ENCODE measurements at regions of chr6 and their contacts with region 1.

Region 1: GRCh38 chr6:131199568-131200272 is 64.5 kb downstream of the AKAP7 start:
- DNase-seq: peak; percentile 70
- ATAC-seq: peak; percentile 91
- H3K4me3 Mint-ChIP-seq: peak overlapping the region; percentile 87
- H3K27ac Mint-ChIP-seq: peak overlapping the region; percentile 90
- H3K4me1 Mint-ChIP-seq: peaks cover 55% of the 10 kb centered on the region
- H3K27me3 Mint-ChIP-seq: no peaks in the 10 kb centered on the region

Region 2: GRCh38 chr6:131182991-131183425 is 16.7 kb before region 1 on chr6:
- POLR2A ChIA-PET with region 1: interaction called, 19 read pairs
- DNase-seq: peak; percentile 56
- ATAC-seq: peak; percentile 86
- H3K4me3 Mint-ChIP-seq: peak overlapping the region; percentile 82
- H3K27ac Mint-ChIP-seq: peak overlapping the region; percentile 99
- H3K4me1 Mint-ChIP-seq: peaks cover 7% of the 10 kb centered on the region
- H3K27me3 Mint-ChIP-seq: no peaks in the 10 kb centered on the region

Region 3: DNA sequence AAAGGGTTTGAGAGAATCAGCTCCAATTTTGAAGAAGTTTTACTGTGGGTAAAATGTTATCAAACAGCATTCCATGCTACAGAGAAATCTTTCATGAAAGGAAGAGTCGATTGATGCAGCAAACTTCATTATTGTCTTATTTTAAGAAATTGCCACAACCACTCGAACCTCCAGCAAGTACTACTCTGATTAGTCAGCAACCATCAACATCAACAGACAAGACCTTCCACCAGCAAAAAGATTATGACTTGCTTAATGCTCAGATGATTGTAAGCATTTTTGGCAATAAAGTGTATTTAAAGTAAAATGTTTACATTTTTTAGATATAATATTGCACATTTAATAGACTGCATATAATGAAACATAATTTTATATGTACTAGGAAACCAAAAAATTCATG is 23.1 kb after region 1 on chr6:
- POLR2A ChIA-PET with region 1: no interaction called
- DNase-seq: no peak
- ATAC-seq: no peak
- H3K4me3 Mint-ChIP-seq: no peak overlapping the region
- H3K27ac Mint-ChIP-seq: no peak overlapping the region
- H3K4me1 Mint-ChIP-seq: peaks cover 6% of the 10 kb centered on the region
- H3K27me3 Mint-ChIP-seq: no peaks in the 10 kb centered on the region

Region 4: DNA sequence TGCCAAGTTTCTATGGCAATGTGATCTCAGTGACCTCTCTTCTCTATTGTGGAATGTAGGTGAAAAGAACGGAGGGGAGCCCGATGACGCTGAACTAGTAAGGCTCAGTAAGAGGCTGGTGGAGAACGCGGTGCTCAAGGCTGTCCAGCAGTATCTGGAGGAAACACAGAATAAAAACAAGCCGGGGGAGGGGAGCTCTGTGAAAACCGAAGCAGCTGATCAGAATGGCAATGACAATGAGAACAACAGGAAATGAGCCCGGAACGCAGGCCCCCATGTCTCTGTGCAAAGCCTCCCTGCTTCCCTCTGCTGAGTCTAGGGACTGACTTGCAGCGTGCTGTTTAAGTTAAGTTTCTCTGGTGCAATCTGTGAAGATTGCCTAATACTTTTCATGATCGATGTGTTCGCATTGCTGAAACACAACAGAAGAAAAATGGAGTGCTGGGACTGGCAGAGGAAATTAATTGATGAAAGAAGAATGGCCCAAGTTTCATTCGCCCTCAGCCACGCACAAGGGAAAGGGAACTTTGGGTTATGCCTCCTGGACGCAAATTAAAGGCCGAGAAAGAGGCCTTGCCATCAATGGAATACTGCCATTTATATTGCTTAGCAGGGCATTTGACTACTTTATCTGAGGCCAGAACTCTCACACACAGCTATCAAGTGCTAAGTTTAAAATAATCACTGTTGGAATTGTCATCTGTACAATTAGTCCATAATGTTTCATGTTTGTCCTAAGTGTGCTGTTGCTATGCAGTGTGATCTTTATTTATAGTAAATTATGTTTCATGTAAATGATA is 82.0 kb after region 1 on chr6:
- POLR2A ChIA-PET with region 1: interaction called, 12 read pairs
- DNase-seq: peak; percentile 62
- ATAC-seq: peak; percentile 98
- H3K4me3 Mint-ChIP-seq: peak overlapping the region; percentile 83
- H3K27ac Mint-ChIP-seq: peak overlapping the region; percentile 92
- H3K4me1 Mint-ChIP-seq: peaks cover 16% of the 10 kb centered on the region
- H3K27me3 Mint-ChIP-seq: no peaks in the 10 kb centered on the region

Region 5: GRCh38 chr6:131532580-131533039 is 332.9 kb after region 1 on chr6:
- POLR2A ChIA-PET with region 1: interaction called, 16 read pairs
- DNase-seq: no peak
- ATAC-seq: peak; percentile 47
- H3K4me3 Mint-ChIP-seq: no peak overlapping the region
- H3K27ac Mint-ChIP-seq: peak overlapping the region; percentile 50
- H3K4me1 Mint-ChIP-seq: peaks cover 36% of the 10 kb centered on the region
- H3K27me3 Mint-ChIP-seq: no peaks in the 10 kb centered on the region

Region 6: DNA sequence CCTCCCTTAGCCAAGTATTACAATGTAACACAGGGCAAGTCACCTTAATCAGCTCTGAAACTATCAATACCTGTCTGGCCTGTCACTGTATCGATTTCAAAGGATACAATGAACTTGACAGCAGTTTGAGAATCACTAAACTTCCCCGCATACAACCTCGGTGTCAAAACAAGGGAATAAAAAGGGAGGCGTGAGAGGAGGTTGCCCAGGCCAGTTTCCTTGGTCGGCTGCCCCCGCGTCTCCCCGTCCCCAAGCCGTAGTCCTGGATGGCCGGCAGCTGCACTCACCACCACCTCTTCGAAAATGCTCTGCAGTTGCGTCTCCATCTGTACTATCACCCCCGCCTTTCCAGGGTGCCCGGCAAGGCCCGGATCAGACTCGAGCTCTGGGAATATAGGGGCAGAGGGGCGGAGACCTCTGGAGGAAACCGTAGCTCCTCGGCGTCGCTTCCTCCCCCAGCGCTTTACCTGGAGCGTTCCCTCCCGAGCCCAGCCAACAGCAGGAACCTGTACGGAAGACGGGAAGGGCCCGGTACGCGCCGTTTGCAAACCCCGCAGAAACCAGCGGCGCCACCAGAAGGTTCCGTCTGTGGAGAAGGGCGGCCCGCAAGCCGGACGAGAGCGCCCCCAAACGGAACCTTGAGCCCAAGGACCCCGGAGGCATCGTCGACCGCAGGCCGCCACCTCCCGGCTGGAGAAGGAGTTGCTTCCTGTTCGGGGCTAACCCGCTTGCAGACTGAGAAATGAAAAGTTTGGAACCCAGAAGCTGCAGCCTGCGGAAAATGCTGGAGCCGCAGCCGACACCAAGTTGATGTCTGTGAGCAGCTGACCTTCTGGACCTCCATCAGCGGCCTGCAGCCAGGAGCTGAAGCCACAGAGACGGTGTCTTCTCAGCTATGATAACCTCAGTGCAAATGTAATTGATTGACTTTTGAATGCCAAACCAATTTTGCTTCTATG is 428.3 kb after region 1 on chr6 and contains the start of gene MED23:
- POLR2A ChIA-PET with region 1: interaction called, 11 read pairs
- DNase-seq: peak; percentile 98
- ATAC-seq: peak; percentile 93
- H3K4me3 Mint-ChIP-seq: peak within 1 kb of the TSS; percentile 94
- H3K27ac Mint-ChIP-seq: peak within 1 kb of the TSS; percentile 85
- H3K4me1 Mint-ChIP-seq: peaks cover 16% of the 10 kb centered on the region
- H3K27me3 Mint-ChIP-seq: no peaks in the 10 kb centered on the region
- total RNA-seq, gene MED23: 35.9 to 40.3 TPM